BJ (cell line): ENCODE measurements at regions of chr3 and their contacts with region 1.

Region 1: GRCh38 chr3:14261229-14261628 is 82.6 kb downstream of the LSM3 start:
- DNase-seq: peak; percentile 14
- H3K4me3 ChIP-seq: no peak overlapping the region
- H3K27me3 ChIP-seq: no peaks in the 10 kb centered on the region; the same call in 1 of the 2 replicates
- CTCF ChIP-seq: peak; percentile 98

Region 2: GRCh38 chr3:14210843-14211594 is 50.2 kb before region 1 on chr3:
- CTCF ChIA-PET with region 1: interaction called, 22 read pairs
- POLR2A ChIA-PET with region 1: no interaction called
- DNase-seq: peak; percentile 99
- H3K4me3 ChIP-seq: no peak overlapping the region
- H3K27me3 ChIP-seq: no peaks in the 10 kb centered on the region
- CTCF ChIP-seq: no peak

Region 3: GRCh38 chr3:14245821-14246813 is 15.1 kb before region 1 on chr3:
- CTCF ChIA-PET with region 1: interaction called, 16 read pairs
- POLR2A ChIA-PET with region 1: no interaction called
- DNase-seq: no peak
- H3K4me3 ChIP-seq: no peak overlapping the region
- H3K27me3 ChIP-seq: no peaks in the 10 kb centered on the region
- CTCF ChIP-seq: no peak

Region 4: GRCh38 chr3:14303336-14304100 is 42.3 kb after region 1 on chr3:
- CTCF ChIA-PET with region 1: no interaction called
- POLR2A ChIA-PET with region 1: no interaction called
- DNase-seq: no peak
- H3K4me3 ChIP-seq: no peak overlapping the region
- H3K27me3 ChIP-seq: peaks cover 21% of the 10 kb centered on the region
- CTCF ChIP-seq: no peak

Region 5: DNA sequence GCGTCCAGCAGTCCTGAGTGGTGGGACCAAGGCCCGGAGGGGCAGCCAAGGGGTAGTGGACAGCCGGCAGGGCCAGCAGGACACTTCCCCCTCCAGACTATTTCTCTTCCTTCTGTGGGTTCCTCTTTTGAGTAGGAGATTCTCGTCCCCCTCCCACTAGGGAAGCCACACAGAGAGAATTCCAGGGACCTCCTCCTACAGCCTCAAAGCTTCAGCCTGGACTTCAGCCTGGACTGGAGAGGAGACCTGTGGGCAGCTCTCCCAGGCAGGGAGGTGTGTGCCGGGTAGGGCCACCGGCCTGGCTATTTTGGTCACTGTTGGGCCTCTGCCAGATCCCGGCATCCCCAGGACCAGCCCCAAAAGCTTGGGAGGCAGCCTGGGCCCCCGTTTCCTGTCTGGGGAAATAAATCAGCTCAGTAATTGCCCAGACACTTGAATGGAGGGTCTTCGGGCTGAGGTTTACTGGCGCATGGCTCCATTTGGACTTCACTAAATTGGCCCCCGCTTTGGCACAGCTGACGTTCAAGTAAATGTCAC is 142.5 kb after region 1 on chr3:
- CTCF ChIA-PET with region 1: interaction called, 10 read pairs
- POLR2A ChIA-PET with region 1: no interaction called
- DNase-seq: no peak
- H3K4me3 ChIP-seq: peak overlapping the region; percentile 99
- H3K27me3 ChIP-seq: no peaks in the 10 kb centered on the region
- CTCF ChIP-seq: no peak

Region 6: GRCh38 chr3:14467814-14468620 is 206.8 kb after region 1 on chr3:
- CTCF ChIA-PET with region 1: interaction called, 29 read pairs
- POLR2A ChIA-PET with region 1: no interaction called
- DNase-seq: no peak
- H3K4me3 ChIP-seq: no peak overlapping the region
- H3K27me3 ChIP-seq: no peaks in the 10 kb centered on the region
- CTCF ChIP-seq: peak; percentile 78